IMR-90 (cell line): ENCODE measurements at regions of chrX and their contacts with region 1.

Region 1: GRCh38 chrX:75547783-75548182 is 24.9 kb upstream of the ZDHHC15 start:
- DNase-seq: no peak
- ATAC-seq: no peak
- H3K4me3 ChIP-seq: no peak overlapping the region
- H3K27ac ChIP-seq: no peak overlapping the region
- H3K4me1 ChIP-seq: no peaks in the 10 kb centered on the region
- H3K27me3 ChIP-seq: no peaks in the 10 kb centered on the region; the same call in 1 of the 2 replicates
- CTCF ChIP-seq: no peak
- POLR2A ChIP-seq: no peak
- RAD21 ChIP-seq: no peak

Region 2: GRCh38 chrX:75997692-75998091 is 449.9 kb after region 1 on chrX:
- CTCF ChIA-PET with region 1: no interaction called
- POLR2A ChIA-PET with region 1: no interaction called
- dilution Hi-C with region 1: no loop called
- in situ Hi-C with region 1: no loop called
- intact Hi-C with region 1: loop called (anchors 10 kb)
- DNase-seq: no peak
- ATAC-seq: no peak
- H3K4me3 ChIP-seq: no peak overlapping the region
- H3K27ac ChIP-seq: no peak overlapping the region
- H3K4me1 ChIP-seq: no peaks in the 10 kb centered on the region
- H3K27me3 ChIP-seq: no peaks in the 10 kb centered on the region
- CTCF ChIP-seq: no peak
- POLR2A ChIP-seq: no peak
- RAD21 ChIP-seq: no peak